HAP-1 (cell line): ENCODE measurements at regions of chr15 and their contacts with region 1.

Region 1: GRCh38 chr15:64423970-64424369 is 36.3 kb downstream of the TRIP4 start:
- DNase-seq: no peak
- H3K4me3 ChIP-seq: no peak overlapping the region
- H3K4me1 ChIP-seq: no peaks in the 10 kb centered on the region
- H3K27me3 ChIP-seq: no peaks in the 10 kb centered on the region

Region 2: DNA sequence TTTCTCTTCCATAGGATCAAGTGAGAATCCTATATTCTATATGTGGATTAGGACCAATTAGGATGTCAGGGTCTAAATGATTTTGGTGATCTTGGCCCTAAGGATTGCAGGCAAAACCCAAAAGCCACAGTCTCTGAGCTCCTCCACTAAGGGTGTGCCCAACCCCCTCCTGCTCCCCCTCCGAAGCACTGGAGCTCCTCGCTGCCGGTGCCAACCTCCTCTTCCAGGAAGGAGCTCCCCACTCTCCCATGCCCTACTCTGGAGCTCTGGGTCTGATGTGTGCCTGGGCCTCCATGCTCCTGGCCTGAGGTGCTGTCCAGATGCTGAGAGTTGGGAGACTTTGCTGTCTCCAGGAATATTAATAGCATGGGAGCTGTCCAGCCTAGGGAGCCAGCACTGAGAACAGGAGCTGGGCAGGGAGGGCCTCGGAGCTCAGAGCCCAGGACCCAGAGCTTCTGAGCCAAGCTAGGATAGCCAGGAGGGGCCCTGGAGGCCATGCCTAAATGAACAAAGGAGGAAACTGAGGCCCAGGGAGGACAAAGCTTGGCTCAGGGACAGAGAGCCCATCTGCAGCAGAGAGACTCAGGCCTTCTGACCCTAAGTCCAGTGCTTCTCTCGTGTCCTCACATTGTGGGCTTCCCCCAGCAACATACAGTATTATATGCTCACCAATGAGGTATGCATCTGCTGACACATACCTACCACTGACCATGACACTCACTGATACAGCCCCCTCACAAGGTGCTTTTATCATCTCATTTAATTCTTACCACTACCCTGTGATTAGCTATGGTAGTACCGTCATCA is 553.4 kb before region 1 on chr15:
- in situ Hi-C with region 1: no loop called
- DNase-seq: peak; percentile 33 to 76
- H3K4me3 ChIP-seq: no peak overlapping the region
- H3K4me1 ChIP-seq: no peaks in the 10 kb centered on the region
- H3K27me3 ChIP-seq: peaks cover 5% of the 10 kb centered on the region; the same call in 1 of the 2 replicates

Region 3: GRCh38 chr15:64681424-64682024 is 257.6 kb after region 1 on chr15:
- in situ Hi-C with region 1: loop called (anchors 5 kb)
- DNase-seq: peak; percentile 85 to 93
- H3K4me3 ChIP-seq: no peak overlapping the region
- H3K4me1 ChIP-seq: no peaks in the 10 kb centered on the region
- H3K27me3 ChIP-seq: no peaks in the 10 kb centered on the region